ENCODE measurements at regions of chr2 and their contacts with region 1.

Region 1: GRCh38 chr2:74488644-74489481 is 6.0 kb downstream of the TTC31 start:
- DNase-seq: no peak
- ATAC-seq: no peak
- H3K4me3 ChIP-seq: no peak overlapping the region
- H3K27ac ChIP-seq: no peak overlapping the region
- H3K4me1 ChIP-seq: peaks cover 3% of the 10 kb centered on the region
- H3K27me3 ChIP-seq: no peaks in the 10 kb centered on the region
- CTCF ChIP-seq: no peak
- POLR2A ChIP-seq: no peak

Region 2: DNA sequence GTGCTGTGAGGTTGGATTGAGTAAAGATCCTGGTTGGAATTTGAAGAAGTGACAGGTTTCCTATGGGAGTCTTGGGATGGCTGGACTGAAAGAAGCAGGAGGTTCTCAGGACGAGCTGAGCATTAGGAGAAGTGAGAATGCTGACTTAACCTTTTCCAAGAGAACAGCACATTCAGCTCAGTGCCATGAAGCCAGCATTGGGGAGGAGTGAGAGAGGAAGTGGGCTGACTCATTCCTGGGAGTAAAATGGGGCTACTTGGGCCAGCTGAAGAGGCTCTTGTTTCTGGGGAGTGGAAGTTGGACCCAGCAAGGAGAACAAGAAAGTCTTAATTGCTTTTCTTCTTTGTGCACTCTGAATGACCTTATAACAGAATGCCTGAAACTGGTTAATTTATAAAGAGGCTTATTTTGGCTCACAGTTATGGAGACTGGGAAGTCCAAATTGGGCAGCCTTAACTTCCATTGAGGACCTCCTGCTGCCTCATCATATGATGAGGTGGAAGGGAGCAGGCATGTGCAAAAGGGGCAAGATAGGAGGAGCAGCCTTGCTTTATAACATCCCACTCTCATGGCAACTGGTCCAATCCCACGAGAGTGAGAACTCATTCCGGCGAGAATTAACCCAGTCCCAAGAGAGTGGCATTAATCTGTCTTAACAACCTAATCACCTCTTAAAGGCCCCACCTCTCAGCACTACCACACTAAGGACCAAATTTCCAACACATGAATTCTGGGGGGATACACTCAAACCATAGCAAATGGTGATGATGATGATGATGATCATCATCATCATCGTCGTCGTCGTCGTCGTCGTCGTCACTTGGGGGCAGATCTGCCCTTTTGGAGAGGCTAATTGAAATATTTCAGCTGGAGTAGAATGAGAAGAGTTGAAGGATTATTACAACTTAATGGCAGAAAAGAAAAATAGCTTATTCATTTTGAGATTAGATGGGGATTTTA is 536.1 kb before region 1 on chr2:
- intact Hi-C with region 1: no loop called
- DNase-seq: peak in 1 of 4 donors; percentile 62
- ATAC-seq: no peak
- H3K4me3 ChIP-seq: no peak overlapping the region
- H3K27ac ChIP-seq: no peak overlapping the region
- H3K4me1 ChIP-seq: no peaks in the 10 kb centered on the region
- H3K27me3 ChIP-seq: no peaks in the 10 kb centered on the region
- CTCF ChIP-seq: no peak
- POLR2A ChIP-seq: no peak

Region 3: DNA sequence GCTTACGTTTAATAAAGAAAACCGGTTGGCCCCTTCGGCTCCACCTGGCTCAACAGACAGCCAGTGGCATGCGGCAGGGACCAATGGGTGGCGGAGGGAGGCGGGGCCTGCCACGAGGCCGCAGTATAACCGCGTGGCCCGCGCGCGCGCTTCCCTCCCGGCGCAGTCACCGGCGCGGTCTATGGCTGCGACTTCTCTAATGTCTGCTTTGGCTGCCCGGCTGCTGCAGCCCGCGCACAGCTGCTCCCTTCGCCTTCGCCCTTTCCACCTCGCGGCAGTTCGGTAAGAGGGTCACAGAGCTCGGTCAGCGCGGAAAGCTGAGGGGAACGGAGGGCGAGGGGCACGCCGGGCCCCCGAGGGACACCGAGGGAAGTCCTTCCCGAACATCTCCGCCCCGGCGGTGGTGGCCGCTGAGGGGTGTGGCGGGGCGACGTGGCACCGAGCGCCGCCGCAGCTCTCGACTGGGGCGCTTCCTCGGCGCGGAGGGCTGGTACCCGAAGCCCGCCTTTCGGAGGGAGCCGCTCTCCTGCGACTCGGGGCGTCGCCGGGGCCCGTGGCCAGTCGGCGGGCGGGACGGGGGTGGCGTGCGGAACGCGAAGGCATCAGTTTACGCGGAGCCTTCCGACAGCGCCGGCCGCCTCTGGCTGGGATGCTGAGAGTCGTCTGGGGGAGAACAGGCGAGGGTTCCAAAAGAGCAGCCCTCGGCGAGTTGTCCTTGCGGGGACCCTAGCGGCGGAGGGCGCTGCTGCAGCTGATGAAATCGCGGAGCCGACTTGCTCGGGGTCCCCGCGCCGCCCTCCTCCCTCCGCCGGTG is 290.2 kb before region 1 on chr2 and contains the start of gene MTHFD2:
- intact Hi-C with region 1: no loop called
- DNase-seq: peak; percentile 93 to 97 (median 96)
- ATAC-seq: peak; percentile 97
- H3K4me3 ChIP-seq: peak within 1 kb of the TSS; percentile 22 to 86
- H3K27ac ChIP-seq: peak within 1 kb of the TSS; percentile 89 to 96 (median 94)
- H3K4me1 ChIP-seq: peaks cover 29% of the 10 kb centered on the region
- H3K27me3 ChIP-seq: no peaks in the 10 kb centered on the region
- CTCF ChIP-seq: peak; percentile 61 to 87 (median 74)
- POLR2A ChIP-seq: peak; percentile 70 to 92 (median 89)
- total RNA-seq, gene MTHFD2: 15.8 to 25.7 TPM

Region 4: GRCh38 chr2:74529357-74530238 is 40.7 kb after region 1 on chr2 and contains the starts of genes AUP1 and HTRA2:
- intact Hi-C with region 1: loop called (anchors 5 kb)
- DNase-seq: peak; percentile 98 to 99 (median 98)
- ATAC-seq: peak; percentile 97
- H3K4me3 ChIP-seq: peak within 1 kb of the TSS; percentile 70 to 82
- H3K27ac ChIP-seq: peak within 1 kb of the TSS; percentile 50 to 90 (median 80)
- H3K4me1 ChIP-seq: peaks cover 27% of the 10 kb centered on the region
- H3K27me3 ChIP-seq: no peaks in the 10 kb centered on the region
- CTCF ChIP-seq: peak in 2 of 7 experiments; percentile 8 to 24
- POLR2A ChIP-seq: peak; percentile 42 to 92 (median 90)
- total RNA-seq, gene AUP1: 82.5 to 170 TPM
- total RNA-seq, gene HTRA2: 14.3 to 14.5 TPM

Region 5: DNA sequence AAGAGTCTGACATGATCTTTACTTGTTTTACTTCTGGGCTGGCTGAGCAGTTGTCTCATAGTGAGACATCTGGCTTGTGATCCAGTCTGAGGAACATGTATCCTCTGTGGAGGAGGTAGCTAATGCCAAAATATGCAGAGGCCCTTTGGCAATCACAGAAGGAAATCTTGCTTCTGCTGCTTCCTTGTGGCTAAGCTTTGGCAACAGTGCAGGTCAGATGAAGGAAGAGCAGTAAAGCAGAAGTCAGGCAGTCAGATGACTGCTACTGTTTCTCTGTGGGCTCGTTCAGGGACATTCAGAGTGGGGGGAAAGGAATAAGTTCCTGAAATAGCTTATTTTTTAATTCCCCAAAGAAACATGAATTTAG is 88.0 kb after region 1 on chr2:
- intact Hi-C with region 1: loop called (anchors 5 kb)
- DNase-seq: peak in 2 of 4 donors; percentile 29 to 76
- ATAC-seq: peak; percentile 63
- H3K4me3 ChIP-seq: no peak overlapping the region
- H3K27ac ChIP-seq: peak overlapping the region in 1 of 4 donors; percentile 54
- H3K4me1 ChIP-seq: no peaks in the 10 kb centered on the region
- H3K27me3 ChIP-seq: no peaks in the 10 kb centered on the region
- CTCF ChIP-seq: no peak
- POLR2A ChIP-seq: peak in 1 of 3 donors; percentile 17

Region 6: GRCh38 chr2:74587664-74588277 is 98.9 kb after region 1 on chr2:
- intact Hi-C with region 1: loop called (anchors 5 kb)
- DNase-seq: peak; percentile 70 to 82 (median 74)
- ATAC-seq: peak; percentile 92
- H3K4me3 ChIP-seq: no peak overlapping the region
- H3K27ac ChIP-seq: no peak overlapping the region
- H3K4me1 ChIP-seq: no peaks in the 10 kb centered on the region
- H3K27me3 ChIP-seq: no peaks in the 10 kb centered on the region
- CTCF ChIP-seq: peak; percentile 34 to 84 (median 74)
- POLR2A ChIP-seq: no peak

Region 7: GRCh38 chr2:74602586-74603281 is 113.9 kb after region 1 on chr2:
- intact Hi-C with region 1: no loop called
- DNase-seq: no peak
- ATAC-seq: no peak
- H3K4me3 ChIP-seq: no peak overlapping the region
- H3K27ac ChIP-seq: no peak overlapping the region
- H3K4me1 ChIP-seq: no peaks in the 10 kb centered on the region
- H3K27me3 ChIP-seq: no peaks in the 10 kb centered on the region
- CTCF ChIP-seq: no peak
- POLR2A ChIP-seq: no peak

Measured in body of pancreas (tissue), 4 donors.